ENCODE measurements at regions of chr20 and their contacts with region 1.

Region 1: GRCh38 chr20:22763257-22763906 is 179.0 kb upstream of the FOXA2 start:
- DNase-seq: peak; percentile 90 to 92
- H3K4me3 ChIP-seq: peak overlapping the region; percentile 29; the same call in 1 of the 2 replicates
- H3K27ac ChIP-seq: peak overlapping the region; percentile 98
- H3K4me1 ChIP-seq: peaks cover 46% of the 10 kb centered on the region
- H3K27me3 ChIP-seq: no peaks in the 10 kb centered on the region
- CTCF ChIP-seq: no peak

Region 2: DNA sequence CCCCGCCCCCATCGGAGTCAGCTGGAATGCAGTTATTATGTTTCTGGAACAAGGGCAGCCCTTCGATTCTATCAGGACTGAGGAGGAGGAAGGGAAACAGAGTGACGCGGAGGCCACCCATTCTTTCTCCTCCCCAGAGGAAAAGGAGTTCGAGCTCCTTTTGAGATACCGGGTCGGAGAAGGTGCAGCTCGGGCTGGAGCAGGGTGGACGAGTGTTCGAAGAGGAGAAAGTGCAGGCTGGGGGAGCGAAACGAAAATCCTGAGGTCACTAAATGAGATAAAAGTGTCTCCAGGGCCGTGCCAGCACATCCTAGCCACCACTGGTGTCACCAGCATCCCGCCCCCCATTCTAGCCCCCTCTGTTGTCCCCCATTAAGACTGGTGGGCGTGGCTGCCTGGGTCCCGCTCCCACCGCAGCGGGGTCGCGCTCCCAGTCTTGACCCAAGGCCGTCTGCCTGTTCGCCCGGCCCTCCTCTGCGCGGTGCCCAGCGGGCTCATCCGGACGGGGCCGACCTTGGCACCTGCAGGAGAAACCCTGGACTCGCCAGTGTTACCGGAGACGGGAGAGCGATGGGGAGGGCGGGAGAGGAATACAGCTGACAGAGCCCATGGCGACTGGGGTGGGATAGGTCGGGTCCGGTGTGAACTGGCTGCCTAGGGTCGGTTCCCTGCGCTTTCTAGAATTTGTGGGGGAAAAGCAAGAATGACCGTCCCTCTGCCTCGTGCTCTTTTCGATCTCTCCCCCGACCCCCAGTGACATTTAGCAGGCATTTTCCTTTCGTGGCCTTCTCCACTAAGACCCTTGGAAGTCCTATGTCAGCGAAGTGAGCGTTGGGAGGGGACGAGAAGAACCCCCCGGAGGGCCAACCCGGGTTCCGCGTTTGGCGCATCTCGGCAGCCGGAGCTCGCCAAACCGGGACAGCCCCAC is 195.2 kb before region 1 on chr20:
- CTCF ChIA-PET with region 1: no interaction called
- POLR2A ChIA-PET with region 1: no interaction called
- intact Hi-C with region 1: no loop called
- DNase-seq: no peak
- H3K4me3 ChIP-seq: no peak overlapping the region
- H3K27ac ChIP-seq: no peak overlapping the region
- H3K4me1 ChIP-seq: peaks cover 6% of the 10 kb centered on the region; the same call in 1 of the 2 replicates
- H3K27me3 ChIP-seq: peaks cover 22% of the 10 kb centered on the region
- CTCF ChIP-seq: no peak

Region 3: GRCh38 chr20:22684072-22684762 is 79.2 kb before region 1 on chr20:
- CTCF ChIA-PET with region 1: no interaction called
- POLR2A ChIA-PET with region 1: no interaction called
- intact Hi-C with region 1: no loop called
- DNase-seq: peak; percentile 56 to 68
- H3K4me3 ChIP-seq: no peak overlapping the region
- H3K27ac ChIP-seq: no peak overlapping the region
- H3K4me1 ChIP-seq: no peaks in the 10 kb centered on the region
- H3K27me3 ChIP-seq: no peaks in the 10 kb centered on the region
- CTCF ChIP-seq: peak; percentile 92

Region 4: DNA sequence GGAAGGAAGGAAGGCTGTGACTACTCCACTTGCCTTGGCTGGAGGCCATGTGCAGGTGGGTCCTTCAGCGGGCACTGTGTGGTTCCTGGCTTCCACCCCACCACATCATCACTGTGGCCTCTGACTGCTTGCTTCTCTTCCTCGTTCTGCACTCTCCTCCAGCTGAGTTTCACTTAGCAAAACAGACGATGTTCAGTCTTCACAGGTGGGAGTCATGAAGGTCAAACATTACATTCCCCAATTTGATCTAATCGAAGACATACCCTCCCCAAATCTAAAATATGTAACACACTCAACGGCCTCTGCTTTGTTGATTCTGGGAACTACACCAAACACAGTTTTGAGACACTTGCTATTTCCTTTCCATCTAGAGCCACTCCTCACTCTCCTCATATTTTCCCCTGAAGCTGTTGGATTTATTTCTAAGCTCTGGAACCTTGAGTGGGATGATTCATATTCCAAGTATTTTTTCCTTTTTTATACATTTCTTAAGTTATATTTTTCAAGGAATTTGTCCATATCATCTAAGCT is 46.5 kb before region 1 on chr20:
- CTCF ChIA-PET with region 1: no interaction called
- POLR2A ChIA-PET with region 1: interaction called, 9 read pairs
- intact Hi-C with region 1: loop called (anchors 1 kb)
- DNase-seq: peak; percentile 57 to 81
- H3K4me3 ChIP-seq: no peak overlapping the region; the same call in 1 of the 2 replicates
- H3K27ac ChIP-seq: peak overlapping the region; percentile 74
- H3K4me1 ChIP-seq: peaks cover 39% of the 10 kb centered on the region
- H3K27me3 ChIP-seq: no peaks in the 10 kb centered on the region
- CTCF ChIP-seq: no peak

Region 5: DNA sequence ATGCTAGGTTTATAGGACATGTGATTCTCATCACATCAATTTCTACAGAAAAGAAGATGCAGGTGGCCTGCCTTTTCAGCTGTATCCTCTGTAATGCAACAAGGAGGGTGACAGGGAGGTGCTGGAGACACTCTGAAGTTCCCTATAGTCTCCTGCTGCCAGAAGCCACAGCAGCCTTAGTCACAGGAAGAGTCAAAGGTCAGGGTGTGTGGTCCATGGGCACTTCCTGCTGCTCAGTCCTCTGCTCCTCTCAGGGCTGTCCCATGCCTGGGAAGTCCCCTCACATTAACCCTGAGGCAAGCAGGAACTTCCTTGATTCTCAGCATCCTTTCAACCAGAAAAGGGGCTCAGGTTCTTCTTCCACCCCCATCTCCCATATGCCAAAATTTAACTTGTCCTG is 34.2 kb before region 1 on chr20:
- CTCF ChIA-PET with region 1: no interaction called
- POLR2A ChIA-PET with region 1: interaction called, 4 read pairs
- intact Hi-C with region 1: loop called (anchors 2 kb)
- DNase-seq: peak; percentile 32 to 74
- H3K4me3 ChIP-seq: no peak overlapping the region
- H3K27ac ChIP-seq: peak overlapping the region; percentile 36; the same call in 1 of the 2 replicates
- H3K4me1 ChIP-seq: peaks cover 31% of the 10 kb centered on the region
- H3K27me3 ChIP-seq: no peaks in the 10 kb centered on the region
- CTCF ChIP-seq: no peak

Region 6: GRCh38 chr20:22775671-22776139 is 12.3 kb after region 1 on chr20:
- CTCF ChIA-PET with region 1: interaction called, 6 read pairs
- POLR2A ChIA-PET with region 1: interaction called, 8 read pairs
- intact Hi-C with region 1: loop called (anchors 1 kb)
- DNase-seq: peak; percentile 69 to 87
- H3K4me3 ChIP-seq: no peak overlapping the region
- H3K27ac ChIP-seq: peak overlapping the region; percentile 81
- H3K4me1 ChIP-seq: peaks cover 42% of the 10 kb centered on the region
- H3K27me3 ChIP-seq: no peaks in the 10 kb centered on the region
- CTCF ChIP-seq: no peak

Region 7: DNA sequence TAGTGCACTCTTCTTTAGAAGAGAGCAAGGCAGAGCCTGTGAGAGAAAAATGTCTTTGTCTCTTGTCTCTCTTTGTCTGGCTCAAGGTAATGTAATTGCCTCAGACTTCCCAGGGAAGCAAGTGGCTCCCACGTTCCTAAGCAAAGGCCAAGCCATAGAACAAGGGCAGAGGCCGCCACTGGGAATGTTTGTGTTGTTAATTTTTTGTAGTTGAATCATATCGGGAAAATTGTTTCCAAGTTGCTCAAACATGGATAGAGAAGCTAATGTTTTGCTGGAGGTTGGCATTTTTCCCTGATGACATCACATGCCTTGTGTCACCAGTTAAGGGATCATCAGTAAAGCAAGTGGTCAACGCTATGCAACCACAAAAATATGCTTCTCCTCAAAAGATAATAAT is 32.5 kb after region 1 on chr20:
- CTCF ChIA-PET with region 1: interaction called, 5 read pairs
- POLR2A ChIA-PET with region 1: interaction called, 9 read pairs
- intact Hi-C with region 1: loop called (anchors 1 kb)
- DNase-seq: peak; percentile 74 to 92
- H3K4me3 ChIP-seq: no peak overlapping the region
- H3K27ac ChIP-seq: peak overlapping the region; percentile 93
- H3K4me1 ChIP-seq: peaks cover 58% of the 10 kb centered on the region
- H3K27me3 ChIP-seq: no peaks in the 10 kb centered on the region
- CTCF ChIP-seq: no peak

Region 8: DNA sequence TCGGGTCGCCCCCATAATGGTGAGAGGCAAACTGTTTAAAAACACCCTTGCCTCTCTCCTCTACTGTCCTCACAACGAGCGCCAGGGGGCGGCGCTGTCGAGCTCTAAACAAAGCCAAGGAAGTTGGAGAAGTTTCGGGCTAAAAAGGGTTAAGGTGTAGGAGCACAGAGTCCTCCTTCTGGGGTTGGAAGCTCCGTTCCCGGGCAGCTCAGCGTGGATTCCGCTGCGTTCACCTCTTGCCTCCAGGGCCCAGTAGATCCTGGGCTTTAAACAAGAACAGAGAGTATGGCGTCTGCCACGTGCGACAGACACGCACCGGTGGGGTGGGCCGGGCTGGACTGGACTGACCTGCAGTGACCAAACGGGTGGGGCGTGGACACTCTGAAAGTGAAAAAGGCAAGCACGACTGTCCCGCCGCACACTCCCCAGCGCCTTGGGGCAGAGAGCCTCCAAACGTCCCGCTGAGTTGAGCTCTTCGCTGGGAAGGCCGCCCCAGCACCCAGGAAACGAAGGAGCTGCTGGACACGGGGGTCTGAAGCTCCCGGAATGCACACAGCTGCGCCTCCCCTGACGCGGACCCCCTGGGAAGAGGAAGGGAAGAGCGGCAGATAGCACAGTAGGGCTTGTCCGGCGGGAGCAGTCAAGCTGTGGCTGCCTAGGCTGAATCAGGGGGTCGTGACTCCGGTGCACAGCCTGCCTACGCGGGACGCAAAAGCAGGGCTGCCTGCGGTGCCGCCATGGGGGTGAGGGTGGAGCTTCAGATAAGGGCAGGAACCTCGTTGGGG is 287.7 kb after region 1 on chr20:
- CTCF ChIA-PET with region 1: no interaction called
- POLR2A ChIA-PET with region 1: interaction called, 8 read pairs
- intact Hi-C with region 1: loop called (anchors 1 kb)
- DNase-seq: peak; percentile 73 to 82
- H3K4me3 ChIP-seq: peak overlapping the region; percentile 75
- H3K27ac ChIP-seq: peak overlapping the region; percentile 97
- H3K4me1 ChIP-seq: peaks cover 22% of the 10 kb centered on the region
- H3K27me3 ChIP-seq: no peaks in the 10 kb centered on the region
- CTCF ChIP-seq: peak; percentile 89

Region 9: DNA sequence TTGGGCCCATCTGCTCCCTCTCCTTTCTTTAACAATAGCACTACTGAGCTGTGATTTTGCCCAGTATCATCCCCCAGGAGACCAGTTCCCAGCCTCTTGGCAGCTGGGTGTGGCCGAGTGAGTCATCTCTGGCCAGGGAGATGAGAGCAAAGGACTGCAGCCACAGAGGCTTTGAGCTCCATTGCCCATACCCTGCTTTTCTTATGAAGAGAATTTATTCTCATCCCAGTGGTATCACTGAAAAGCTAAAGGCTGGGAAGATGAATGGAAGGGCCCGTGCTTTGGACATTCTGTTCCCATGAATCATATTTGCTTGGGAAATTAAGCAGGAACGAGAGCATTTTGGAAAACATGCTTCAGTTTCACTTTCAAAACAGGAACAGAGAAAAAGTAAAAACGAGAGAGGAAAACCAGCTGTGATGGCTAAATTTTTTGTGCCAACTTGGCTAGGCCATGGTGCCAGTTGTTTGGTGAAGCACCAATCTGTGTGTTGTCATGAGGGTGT is 859.5 kb after region 1 on chr20:
- CTCF ChIA-PET with region 1: no interaction called
- POLR2A ChIA-PET with region 1: no interaction called
- intact Hi-C with region 1: loop called (anchors 10 kb)
- DNase-seq: peak; percentile 74 to 81
- H3K4me3 ChIP-seq: peak overlapping the region; percentile 42; the same call in 1 of the 2 replicates
- H3K27ac ChIP-seq: peak overlapping the region; percentile 90
- H3K4me1 ChIP-seq: peaks cover 23% of the 10 kb centered on the region
- H3K27me3 ChIP-seq: no peaks in the 10 kb centered on the region
- CTCF ChIP-seq: no peak

Measured in PC-9 (cell line).